Activated B cell treated with CpG ODN at 0.5 μM for 24 hours (primary cell): ENCODE measurements at regions of chr15 and their contacts with region 1.

Region 1: DNA sequence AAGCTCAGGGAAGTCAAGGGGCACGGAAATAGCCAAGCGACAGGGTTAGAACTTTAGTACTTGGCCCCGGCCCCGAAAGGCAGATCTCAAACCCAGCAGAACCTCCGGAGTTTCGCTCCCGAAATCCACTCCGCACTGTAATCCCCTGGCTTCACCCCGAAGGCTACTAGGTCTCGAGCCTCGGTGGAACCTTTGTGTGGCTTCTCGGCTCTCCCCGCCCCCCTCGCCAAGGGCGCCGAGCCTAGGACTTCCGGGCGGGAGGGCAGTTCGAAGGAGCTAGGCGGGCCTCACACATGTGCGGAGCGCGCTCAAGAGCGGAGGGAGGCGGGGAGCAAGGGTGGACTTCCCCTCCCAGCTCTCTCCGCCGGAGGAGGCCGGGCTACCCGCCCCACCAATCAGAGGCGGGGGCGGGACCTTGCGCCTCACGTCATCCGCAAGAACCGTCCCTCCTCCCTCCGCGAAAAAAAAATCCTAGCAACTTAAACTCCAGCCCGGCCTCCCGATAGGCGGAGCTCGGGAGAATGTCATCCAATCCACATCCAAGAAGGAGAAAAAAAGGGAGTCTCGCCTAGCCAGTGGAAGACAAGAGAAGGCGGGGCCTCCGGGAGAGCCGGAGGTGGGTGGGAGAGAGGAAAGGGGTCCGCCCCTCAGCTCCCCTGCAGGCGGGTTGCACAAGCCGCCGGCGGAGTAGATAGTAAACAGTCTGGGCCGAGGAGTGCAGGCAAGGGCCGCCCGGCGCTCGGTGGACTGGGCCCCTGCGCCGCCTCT is 2.4 kb upstream of the SIN3A start:
- DNase-seq: peak; percentile 93
- ATAC-seq: peak; percentile 38
- H3K4me3 Mint-ChIP-seq: peak overlapping the region; percentile 93
- H3K27ac Mint-ChIP-seq: peak overlapping the region; percentile 97
- H3K4me1 Mint-ChIP-seq: peaks cover 41% of the 10 kb centered on the region
- H3K27me3 Mint-ChIP-seq: no peaks in the 10 kb centered on the region
- CTCF ChIP-seq: no peak

Region 2: GRCh38 chr15:73991726-73992593 is 1461.9 kb before region 1 on chr15 and contains the start of gene STOML1:
- CTCF ChIA-PET with region 1: no interaction called
- POLR2A ChIA-PET with region 1: interaction called, 3 read pairs
- intact Hi-C with region 1: loop called (anchors 2 kb)
- DNase-seq: peak; percentile 98
- ATAC-seq: peak; percentile 77
- H3K4me3 Mint-ChIP-seq: peak within 1 kb of the TSS; percentile 86
- H3K27ac Mint-ChIP-seq: peak within 1 kb of the TSS; percentile 69
- H3K4me1 Mint-ChIP-seq: peaks cover 66% of the 10 kb centered on the region
- H3K27me3 Mint-ChIP-seq: no peaks in the 10 kb centered on the region
- CTCF ChIP-seq: no peak
- total RNA-seq, gene STOML1: 8.9 and 10.6 TPM in 2 replicates

Region 3: DNA sequence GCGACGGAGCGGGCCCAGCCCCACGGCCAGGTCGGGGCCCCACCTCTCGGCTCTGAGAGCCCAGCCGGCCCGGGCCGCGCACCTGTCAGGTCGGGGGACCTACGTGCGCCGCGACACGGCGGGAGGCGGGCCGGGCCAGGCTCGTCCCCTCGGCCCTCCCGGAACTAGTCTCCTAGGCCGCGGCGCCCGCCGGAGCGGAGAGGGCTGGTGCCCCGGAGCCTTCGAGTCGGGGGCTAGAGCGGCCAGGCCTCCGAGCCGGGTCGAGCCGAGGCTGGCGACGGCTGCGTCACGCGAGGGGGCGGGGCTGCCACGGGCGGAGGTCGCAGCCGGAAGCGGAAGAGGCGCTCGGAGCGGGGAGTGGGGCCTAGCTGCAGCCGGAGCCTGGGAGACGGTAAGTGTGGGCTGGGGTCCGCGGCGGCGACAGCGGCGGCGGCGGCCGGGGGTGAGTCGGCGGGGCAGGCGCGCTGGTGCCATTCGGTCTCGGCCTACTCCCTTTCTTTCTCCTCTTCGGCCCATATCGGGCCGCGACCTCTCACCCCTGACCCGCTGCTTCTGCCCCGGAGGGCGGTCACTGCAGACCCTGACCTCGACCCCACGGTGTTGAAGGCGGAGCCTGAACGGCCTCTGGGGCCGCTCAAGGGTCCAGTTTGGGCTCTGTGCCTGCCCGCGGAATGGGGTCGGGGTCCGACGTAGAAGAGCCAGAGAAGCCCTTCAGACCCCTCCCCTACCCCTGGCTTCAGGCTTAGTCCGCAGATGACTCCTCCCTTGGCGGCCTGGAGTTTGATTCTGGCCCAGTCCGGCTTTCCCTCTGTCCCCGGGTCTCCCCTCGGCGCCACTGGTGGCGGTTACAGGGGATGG is 838.1 kb before region 1 on chr15 and contains the start of gene CLK3:
- CTCF ChIA-PET with region 1: no interaction called
- POLR2A ChIA-PET with region 1: interaction called, 13 read pairs
- intact Hi-C with region 1: loop called (anchors 2 kb)
- DNase-seq: peak; percentile 99
- ATAC-seq: peak; percentile 83
- H3K4me3 Mint-ChIP-seq: peak within 1 kb of the TSS; percentile 89
- H3K27ac Mint-ChIP-seq: peak within 1 kb of the TSS; percentile 95
- H3K4me1 Mint-ChIP-seq: peaks cover 35% of the 10 kb centered on the region
- H3K27me3 Mint-ChIP-seq: no peaks in the 10 kb centered on the region
- CTCF ChIP-seq: no peak
- total RNA-seq, gene CLK3: 100 and 116 TPM in 2 replicates

Region 4: DNA sequence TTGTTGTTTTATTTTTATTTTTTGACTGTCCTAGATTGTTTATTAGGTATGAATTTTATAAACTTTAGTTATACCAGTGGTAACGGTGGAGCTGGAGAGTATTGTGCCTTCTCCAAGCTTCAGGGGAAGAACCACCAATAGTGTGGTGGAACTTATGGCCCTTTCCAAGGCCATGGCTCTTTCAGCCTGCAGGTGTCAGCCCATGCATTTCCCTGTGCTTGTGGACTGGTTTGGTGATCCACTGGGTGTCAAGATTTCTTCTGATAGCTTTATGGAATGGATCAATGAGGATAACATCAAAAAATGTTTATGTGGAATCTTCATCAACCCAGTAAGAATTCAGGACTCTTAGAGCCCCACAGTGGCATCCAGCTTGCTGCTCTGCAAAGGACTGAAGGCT is 477.7 kb before region 1 on chr15:
- CTCF ChIA-PET with region 1: no interaction called
- POLR2A ChIA-PET with region 1: no interaction called
- intact Hi-C with region 1: no loop called
- DNase-seq: no peak
- ATAC-seq: no peak
- H3K4me3 Mint-ChIP-seq: no peak overlapping the region
- H3K27ac Mint-ChIP-seq: no peak overlapping the region
- H3K4me1 Mint-ChIP-seq: no peaks in the 10 kb centered on the region
- H3K27me3 Mint-ChIP-seq: peaks cover 29% of the 10 kb centered on the region
- CTCF ChIP-seq: no peak

Region 5: GRCh38 chr15:75042730-75043508 is 411.0 kb before region 1 on chr15:
- CTCF ChIA-PET with region 1: no interaction called
- POLR2A ChIA-PET with region 1: no interaction called
- intact Hi-C with region 1: loop called (anchors 5 kb)
- DNase-seq: peak; percentile 82
- ATAC-seq: peak; percentile 87
- H3K4me3 Mint-ChIP-seq: peak overlapping the region; percentile 70
- H3K27ac Mint-ChIP-seq: peak overlapping the region; percentile 84
- H3K4me1 Mint-ChIP-seq: peaks cover 60% of the 10 kb centered on the region
- H3K27me3 Mint-ChIP-seq: no peaks in the 10 kb centered on the region
- CTCF ChIP-seq: no peak

Region 6: DNA sequence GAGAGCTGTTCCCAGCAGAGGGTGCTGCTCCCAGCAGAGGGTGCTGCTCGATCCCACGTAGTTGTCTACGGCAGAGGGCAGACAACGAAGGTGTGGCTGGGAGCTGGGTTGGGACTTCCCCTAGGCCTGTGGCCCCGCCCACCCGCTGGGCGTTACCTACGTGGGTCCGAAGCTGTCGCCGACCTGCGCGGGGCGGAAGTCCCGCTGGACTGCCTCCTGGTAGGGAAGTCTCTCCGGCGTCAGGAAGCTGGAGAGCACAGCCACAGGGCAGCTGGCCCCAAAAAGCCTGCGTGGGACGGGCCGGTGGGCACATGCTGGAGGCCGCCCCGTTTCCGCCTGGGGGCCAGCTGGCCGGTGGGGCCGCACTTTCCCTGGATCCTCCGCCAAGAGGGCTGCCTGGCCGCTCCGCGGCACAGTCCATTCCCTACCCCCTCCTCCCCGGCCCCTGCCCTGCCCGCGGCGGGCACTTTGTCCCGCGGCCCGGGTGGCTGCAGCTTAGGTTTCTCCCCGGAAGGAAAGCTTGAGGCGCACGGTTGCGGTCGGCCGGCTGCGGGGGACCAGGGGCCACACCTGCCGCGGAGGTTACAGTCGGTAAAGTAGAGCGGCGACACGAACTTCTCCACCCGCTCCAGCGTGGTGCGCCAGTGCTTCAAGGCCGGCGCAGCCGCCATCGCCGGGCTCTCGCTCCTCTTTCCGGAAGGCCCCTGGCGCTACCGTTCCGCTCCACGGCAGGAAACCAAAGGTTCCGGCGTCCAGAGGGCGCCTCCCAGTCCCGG is 85.8 kb before region 1 on chr15 and contains the start of gene MAN2C1:
- CTCF ChIA-PET with region 1: interaction called, 13 read pairs
- POLR2A ChIA-PET with region 1: interaction called, 78 read pairs
- intact Hi-C with region 1: loop called (anchors 1 kb)
- DNase-seq: peak; percentile 92
- ATAC-seq: peak; percentile 93
- H3K4me3 Mint-ChIP-seq: peak within 1 kb of the TSS; percentile 90
- H3K27ac Mint-ChIP-seq: peak within 1 kb of the TSS; percentile 92
- H3K4me1 Mint-ChIP-seq: peaks cover 26% of the 10 kb centered on the region
- H3K27me3 Mint-ChIP-seq: no peaks in the 10 kb centered on the region
- CTCF ChIP-seq: no peak
- total RNA-seq, gene MAN2C1: 187 and 213 TPM in 2 replicates

Region 7: GRCh38 chr15:75578948-75579920 is 125.3 kb after region 1 on chr15 and contains the start of gene PTPN9:
- CTCF ChIA-PET with region 1: interaction called, 4 read pairs
- POLR2A ChIA-PET with region 1: interaction called, 31 read pairs
- intact Hi-C with region 1: loop called (anchors 1 kb)
- DNase-seq: peak; percentile 63
- ATAC-seq: peak; percentile 87
- H3K4me3 Mint-ChIP-seq: peak within 1 kb of the TSS; percentile 92
- H3K27ac Mint-ChIP-seq: peak within 1 kb of the TSS; percentile 82
- H3K4me1 Mint-ChIP-seq: peaks cover 19% of the 10 kb centered on the region
- H3K27me3 Mint-ChIP-seq: no peaks in the 10 kb centered on the region
- CTCF ChIP-seq: no peak
- total RNA-seq, gene PTPN9: 18.2 and 19.2 TPM in 2 replicates

Region 8: GRCh38 chr15:75738647-75739331 is 284.9 kb after region 1 on chr15:
- CTCF ChIA-PET with region 1: no interaction called
- POLR2A ChIA-PET with region 1: interaction called, 4 read pairs
- intact Hi-C with region 1: loop called (anchors 1 kb)
- DNase-seq: peak; percentile 95
- ATAC-seq: peak; percentile 98
- H3K4me3 Mint-ChIP-seq: peak overlapping the region; percentile 82
- H3K27ac Mint-ChIP-seq: peak overlapping the region; percentile 65
- H3K4me1 Mint-ChIP-seq: peaks cover 15% of the 10 kb centered on the region
- H3K27me3 Mint-ChIP-seq: peaks cover 7% of the 10 kb centered on the region
- CTCF ChIP-seq: no peak